Common myeloid progenitor, CD34-positive (primary cell): ENCODE measurements at regions of chr1 and their contacts with region 1.

Region 1: GRCh38 chr1:209630383-209631225 is 21.6 kb downstream of the LAMB3 start:
- DNase-seq: no peak
- H3K4me3 ChIP-seq: no peak overlapping the region
- H3K27ac ChIP-seq: no peak overlapping the region
- H3K4me1 ChIP-seq: peaks cover 0 to 10% (median 3%) of the 10 kb centered on the region in 4 experiments
- H3K27me3 ChIP-seq: peaks cover 0 to 17% (median 10%) of the 10 kb centered on the region in 5 experiments

Region 2: GRCh38 chr1:209601809-209602657 is 28.6 kb before region 1 on chr1:
- CTCF ChIA-PET with region 1: interaction called, 16 read pairs
- POLR2A ChIA-PET with region 1: no interaction called
- DNase-seq: peak; percentile 50 to 68 (median 67)
- H3K4me3 ChIP-seq: no peak overlapping the region
- H3K27ac ChIP-seq: no peak overlapping the region
- H3K4me1 ChIP-seq: no peaks in the 10 kb centered on the region
- H3K27me3 ChIP-seq: peaks cover 2 to 8% (median 4%) of the 10 kb centered on the region in 5 experiments

Region 3: DNA sequence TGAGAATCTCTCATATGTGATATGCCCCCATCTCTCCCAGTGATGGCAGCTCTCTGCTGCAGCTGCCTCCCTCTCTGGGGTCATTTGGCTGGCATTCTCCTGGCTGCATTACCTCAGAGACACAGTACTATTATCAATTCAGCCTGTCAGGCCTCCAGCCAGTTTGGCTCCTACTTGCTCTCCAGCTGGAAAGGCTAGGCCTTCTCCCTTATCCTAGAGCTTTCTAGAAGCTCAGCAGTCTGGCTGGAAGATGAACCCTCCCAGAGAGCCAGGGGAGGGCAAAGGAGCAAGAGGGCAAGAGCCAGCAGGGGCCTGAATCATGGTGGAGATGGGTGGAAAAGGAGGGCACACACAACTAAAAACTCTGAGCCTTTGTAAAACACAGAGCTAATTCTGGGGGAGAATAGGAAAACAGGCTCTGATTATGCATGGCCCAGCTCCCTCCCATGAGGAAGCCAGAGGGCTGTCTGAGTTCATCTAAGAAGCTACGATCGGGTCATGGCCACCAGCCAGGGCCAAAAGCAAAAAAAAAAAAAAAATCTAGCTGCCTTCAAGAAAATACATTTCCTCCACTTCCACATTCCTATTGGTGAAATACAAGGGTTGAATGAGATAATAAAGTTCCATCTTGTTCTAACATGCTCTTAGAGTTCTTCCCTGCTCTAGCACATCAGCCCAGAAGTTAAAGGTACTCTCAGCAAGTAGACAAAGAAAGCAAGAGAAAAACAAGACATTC is 12.8 kb after region 1 on chr1:
- CTCF ChIA-PET with region 1: interaction called, 12 read pairs
- POLR2A ChIA-PET with region 1: no interaction called
- DNase-seq: no peak
- H3K4me3 ChIP-seq: no peak overlapping the region
- H3K27ac ChIP-seq: no peak overlapping the region
- H3K4me1 ChIP-seq: peaks cover 0 to 5% (median 3%) of the 10 kb centered on the region in 4 experiments
- H3K27me3 ChIP-seq: peaks cover 0 to 3% (median 2%) of the 10 kb centered on the region in 5 experiments

Region 4: DNA sequence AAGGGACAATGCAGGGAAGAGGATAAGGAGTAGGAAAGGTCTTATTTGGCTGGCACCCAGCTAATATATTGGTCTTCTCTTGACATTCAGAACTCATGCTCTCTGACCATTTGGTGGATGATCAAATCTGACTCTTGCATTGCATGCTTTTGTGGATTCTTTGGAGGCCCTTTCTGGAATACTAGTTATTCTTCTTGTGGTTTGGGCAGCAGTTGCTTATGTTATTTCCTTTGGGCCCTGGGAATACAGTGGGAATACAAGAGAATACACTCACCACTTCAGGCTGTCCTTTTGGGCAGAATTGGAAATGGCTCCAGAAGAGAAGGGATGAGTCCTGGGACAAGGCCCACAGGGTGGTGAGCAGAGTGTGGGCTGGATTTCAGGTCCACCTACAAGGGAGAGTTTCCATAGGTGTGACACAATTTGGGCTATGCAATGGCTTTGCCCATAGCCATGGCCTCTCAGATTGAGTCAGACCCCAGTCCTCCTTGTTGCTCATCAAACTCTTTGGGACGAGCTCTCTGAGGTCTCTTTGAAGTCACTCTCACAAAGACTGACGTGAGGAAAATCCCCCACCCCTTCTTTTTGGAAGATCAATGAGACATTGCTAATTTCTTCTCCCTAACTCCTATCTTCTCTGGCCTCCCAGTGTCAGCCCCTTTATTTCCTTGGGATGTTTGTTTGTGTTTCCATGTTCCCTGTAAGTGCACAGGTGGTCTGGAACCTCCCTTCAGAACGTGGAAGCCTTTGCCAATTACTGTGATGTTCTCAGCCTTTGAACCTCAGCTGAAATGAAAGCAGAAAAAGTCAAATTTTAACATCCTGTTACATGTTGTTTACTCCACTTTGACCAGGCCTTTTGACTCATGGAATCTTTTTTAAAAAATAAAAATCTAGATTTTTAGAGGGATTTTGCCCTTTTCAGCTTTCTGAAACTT is 93.4 kb after region 1 on chr1:
- CTCF ChIA-PET with region 1: no interaction called
- POLR2A ChIA-PET with region 1: no interaction called
- DNase-seq: no peak
- H3K4me3 ChIP-seq: no peak overlapping the region
- H3K27ac ChIP-seq: no peak overlapping the region
- H3K4me1 ChIP-seq: no peaks in the 10 kb centered on the region
- H3K27me3 ChIP-seq: no peaks in the 10 kb centered on the region

Region 5: GRCh38 chr1:209747580-209748262 is 117.1 kb after region 1 on chr1:
- CTCF ChIA-PET with region 1: no interaction called
- POLR2A ChIA-PET with region 1: no interaction called
- DNase-seq: peak; percentile 85 to 88 (median 85)
- H3K4me3 ChIP-seq: peak overlapping the region; percentile 9 to 75 (median 52)
- H3K27ac ChIP-seq: peak overlapping the region in 1 of 2 experiments; percentile 38
- H3K4me1 ChIP-seq: peaks cover 5 to 34% (median 22%) of the 10 kb centered on the region in 4 experiments
- H3K27me3 ChIP-seq: no peaks in the 10 kb centered on the region